K562 (cell line): ENCODE measurements at regions of chr6 and their contacts with region 1.

Region 1: DNA sequence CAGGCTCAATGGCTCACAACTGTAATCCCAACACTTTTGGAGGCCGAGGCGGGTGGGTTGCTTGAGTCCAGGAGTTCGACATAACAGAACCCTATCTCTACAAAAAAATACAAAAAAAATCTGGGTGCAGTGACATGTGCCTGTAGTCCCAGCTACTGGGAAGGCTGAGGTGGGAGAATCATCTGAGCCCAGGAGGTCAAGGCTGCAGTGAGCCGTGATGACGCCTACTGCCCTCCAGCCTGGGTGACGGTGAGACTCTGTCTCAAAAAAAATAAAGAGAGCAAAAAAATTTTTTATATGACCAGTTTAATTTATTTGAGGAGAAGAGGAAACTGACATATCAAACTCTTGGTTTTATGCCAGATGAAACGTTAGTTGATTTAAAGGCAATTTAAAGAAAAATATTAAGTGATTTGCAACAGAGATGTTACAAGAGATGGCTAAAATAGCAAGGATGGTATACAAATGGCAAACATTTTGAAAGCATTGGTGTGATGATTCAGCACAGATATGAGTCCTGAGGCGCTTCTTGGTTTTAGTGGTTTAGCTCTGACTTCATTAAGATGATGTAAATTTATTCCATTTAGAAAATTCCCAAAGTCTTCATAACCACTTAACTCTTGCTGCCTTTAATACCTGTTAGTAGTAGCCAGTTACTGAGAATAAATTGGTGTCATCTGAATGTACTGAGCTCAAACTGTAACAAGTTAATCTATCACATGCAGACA is 17.7 kb downstream of the GTF2H5 start:
- DNase-seq: no peak
- ATAC-seq: no peak
- H3K4me3 ChIP-seq: no peak overlapping the region
- H3K27ac ChIP-seq: no peak overlapping the region
- H3K4me1 ChIP-seq: peaks cover 0 to 4% of the 10 kb centered on the region in 2 experiments; a peak in 3 of 5 replicates
- H3K27me3 ChIP-seq: no peaks in the 10 kb centered on the region
- CTCF ChIP-seq: no peak
- EP300 ChIP-seq: no peak
- POLR2A ChIP-seq: no peak
- RAD21 ChIP-seq: no peak

Region 2: DNA sequence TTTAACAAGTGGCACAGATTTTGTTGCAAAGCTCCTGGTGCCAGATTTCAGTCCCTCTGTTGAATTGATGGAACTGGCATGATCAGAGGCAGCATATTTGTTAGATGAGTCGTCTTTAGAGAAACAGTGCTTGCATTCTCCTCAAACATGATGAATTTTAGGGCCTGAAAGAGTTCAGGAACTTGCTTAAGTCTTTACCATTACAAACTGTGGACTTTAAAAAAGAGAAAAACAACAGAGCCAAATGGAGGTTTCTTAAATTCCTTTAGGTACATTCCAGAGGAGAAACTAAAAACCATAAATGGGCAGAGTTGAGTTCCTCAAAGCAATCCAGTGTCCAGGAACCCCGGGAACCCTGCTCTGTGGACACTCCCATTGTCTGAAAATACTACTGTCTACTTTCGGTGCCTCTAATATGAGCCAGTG is 15.2 kb before region 1 on chr6:
- CTCF ChIA-PET with region 1: no interaction called
- POLR2A ChIA-PET with region 1: interaction called, 3 read pairs
- in situ Hi-C with region 1: no loop called
- intact Hi-C with region 1: loop called (anchors 1 kb)
- DNase-seq: no peak
- ATAC-seq: no peak
- H3K4me3 ChIP-seq: no peak overlapping the region
- H3K27ac ChIP-seq: no peak overlapping the region
- H3K4me1 ChIP-seq: peaks cover 0 to 16% of the 10 kb centered on the region in 2 experiments; a peak in 2 of 5 replicates
- H3K27me3 ChIP-seq: no peaks in the 10 kb centered on the region
- CTCF ChIP-seq: no peak
- EP300 ChIP-seq: no peak
- POLR2A ChIP-seq: no peak
- RAD21 ChIP-seq: no peak